Activated CD4-positive, alpha-beta T cell treated with anti-CD3 and anti-CD28 coated beads, Interleukin-2, amount 10 ng/mL, durations not matched to agents 7 days and 5 days (primary cell): ENCODE measurements at regions of chr9 and their contacts with region 1.

Region 1: GRCh38 chr9:135877776-135878527 is 29.4 kb downstream of the CAMSAP1 start:
- DNase-seq: no peak
- H3K4me3 Mint-ChIP-seq: no peak overlapping the region
- H3K27ac Mint-ChIP-seq: no peak overlapping the region
- H3K4me1 Mint-ChIP-seq: peaks cover 3% of the 10 kb centered on the region
- H3K27me3 Mint-ChIP-seq: no peaks in the 10 kb centered on the region

Region 2: GRCh38 chr9:135473972-135474543 is 403.9 kb before region 1 on chr9:
- CTCF ChIA-PET with region 1: no interaction called
- POLR2A ChIA-PET with region 1: interaction called, 13 read pairs
- DNase-seq: no peak
- H3K4me3 Mint-ChIP-seq: no peak overlapping the region
- H3K27ac Mint-ChIP-seq: no peak overlapping the region
- H3K4me1 Mint-ChIP-seq: peaks cover 8% of the 10 kb centered on the region
- H3K27me3 Mint-ChIP-seq: peaks cover 20% of the 10 kb centered on the region